Caco-2 (cell line): ENCODE measurements at regions of chr3 and their contacts with region 1.

Region 1: GRCh38 chr3:143951351-143951971 is 20.2 kb upstream of the DIPK2A start:
- DNase-seq: peak; percentile 36 to 47
- H3K4me3 ChIP-seq: no peak overlapping the region
- H3K4me3 Mint-ChIP-seq: no peak overlapping the region
- H3K27ac Mint-ChIP-seq: no peak overlapping the region
- H3K4me1 ChIP-seq: no peaks in the 10 kb centered on the region
- H3K4me1 Mint-ChIP-seq: peaks cover 6% of the 10 kb centered on the region
- H3K27me3 ChIP-seq: no peaks in the 10 kb centered on the region
- H3K27me3 Mint-ChIP-seq: no peaks in the 10 kb centered on the region
- CTCF ChIP-seq: peak; percentile 70 to 76

Region 2: GRCh38 chr3:143775459-143775858 is 176.0 kb before region 1 on chr3:
- CTCF ChIA-PET with region 1: no interaction called
- POLR2A ChIA-PET with region 1: no interaction called
- intact Hi-C with region 1: loop called (anchors 1 kb)
- DNase-seq: peak in 1 of 2 experiments; percentile 32
- H3K4me3 ChIP-seq: no peak overlapping the region
- H3K4me3 Mint-ChIP-seq: no peak overlapping the region
- H3K27ac Mint-ChIP-seq: no peak overlapping the region
- H3K4me1 ChIP-seq: no peaks in the 10 kb centered on the region
- H3K4me1 Mint-ChIP-seq: no peaks in the 10 kb centered on the region
- H3K27me3 ChIP-seq: no peaks in the 10 kb centered on the region
- H3K27me3 Mint-ChIP-seq: peaks cover 6% of the 10 kb centered on the region
- CTCF ChIP-seq: peak; percentile 17 to 58

Region 3: GRCh38 chr3:143885780-143886427 is 65.6 kb before region 1 on chr3:
- CTCF ChIA-PET with region 1: no interaction called
- POLR2A ChIA-PET with region 1: no interaction called
- intact Hi-C with region 1: loop called (anchors 1 kb)
- DNase-seq: peak in 1 of 2 experiments; percentile 41
- H3K4me3 ChIP-seq: no peak overlapping the region
- H3K4me3 Mint-ChIP-seq: no peak overlapping the region
- H3K27ac Mint-ChIP-seq: no peak overlapping the region
- H3K4me1 ChIP-seq: no peaks in the 10 kb centered on the region
- H3K4me1 Mint-ChIP-seq: no peaks in the 10 kb centered on the region
- H3K27me3 ChIP-seq: no peaks in the 10 kb centered on the region
- H3K27me3 Mint-ChIP-seq: no peaks in the 10 kb centered on the region
- CTCF ChIP-seq: peak; percentile 69 to 81

Region 4: DNA sequence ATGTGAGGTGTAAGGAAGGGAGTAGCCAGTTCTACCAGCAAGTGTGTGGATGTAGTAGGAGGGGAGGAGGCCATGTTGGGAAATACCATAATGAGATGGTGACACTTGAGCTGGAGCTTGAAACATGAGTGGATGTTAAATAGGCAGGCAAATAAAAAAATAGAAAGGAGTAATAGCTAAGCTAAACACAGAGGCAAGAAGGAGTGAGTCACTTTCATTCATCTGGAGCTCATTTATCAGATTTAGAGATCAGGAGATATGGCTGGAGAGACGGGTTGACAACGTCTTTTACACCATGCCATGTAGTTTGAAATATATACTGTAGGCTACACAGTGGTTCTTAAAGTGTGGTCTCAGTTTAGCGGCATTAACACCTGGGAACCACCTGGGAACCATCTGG is 410.7 kb after region 1 on chr3:
- CTCF ChIA-PET with region 1: no interaction called
- POLR2A ChIA-PET with region 1: no interaction called
- intact Hi-C with region 1: no loop called
- DNase-seq: no peak
- H3K4me3 ChIP-seq: no peak overlapping the region
- H3K4me3 Mint-ChIP-seq: no peak overlapping the region
- H3K27ac Mint-ChIP-seq: peak overlapping the region; percentile 54
- H3K4me1 ChIP-seq: peaks cover 74% of the 10 kb centered on the region
- H3K4me1 Mint-ChIP-seq: peaks cover 45% of the 10 kb centered on the region
- H3K27me3 ChIP-seq: no peaks in the 10 kb centered on the region
- H3K27me3 Mint-ChIP-seq: no peaks in the 10 kb centered on the region
- CTCF ChIP-seq: no peak